Dorsolateral prefrontal cortex (tissue), 120 donors: ENCODE measurements at regions of chr14 and their contacts with region 1.

Region 1: GRCh38 chr14:80850197-80850814 is 91.2 kb downstream of the CEP128 start:
- DNase-seq: no peak
- H3K4me3 ChIP-seq: no peak overlapping the region
- H3K27ac ChIP-seq: no peak overlapping the region
- H3K27me3 ChIP-seq: no peaks in the 10 kb centered on the region
- CTCF ChIP-seq: peak; percentile 59 to 94 (median 78)

Region 2: GRCh38 chr14:78959674-78960264 is 1890.5 kb before region 1 on chr14:
- intact Hi-C with region 1: loop called in 1 of 2 experiments (anchors 10 kb)
- DNase-seq: peak; percentile 63 to 87 (median 80)
- H3K4me3 ChIP-seq: peak overlapping the region in 46 of 59 donors; percentile 2 to 54 (median 30)
- H3K27ac ChIP-seq: no peak overlapping the region
- H3K27me3 ChIP-seq: no peaks in the 10 kb centered on the region
- CTCF ChIP-seq: peak; percentile 73 to 97 (median 92)

Region 3: DNA sequence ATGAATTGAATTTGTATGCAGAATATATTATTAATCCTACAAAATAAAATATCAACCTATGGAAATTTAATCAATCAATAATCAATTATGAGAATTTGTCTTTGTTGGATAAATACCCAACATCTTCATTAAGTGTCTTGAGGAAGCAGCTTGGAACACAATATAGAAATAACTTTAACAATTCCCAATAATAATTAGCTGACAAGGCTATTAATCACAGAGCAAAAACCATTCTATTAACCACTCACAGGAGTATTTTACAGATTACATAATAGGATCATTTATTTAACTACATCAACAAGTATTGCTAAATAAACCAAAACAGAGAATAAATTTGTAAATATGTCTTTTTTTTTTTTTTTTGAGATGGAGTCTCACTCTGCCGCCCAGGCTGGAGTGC is 99.0 kb before region 1 on chr14:
- intact Hi-C with region 1: no loop called
- DNase-seq: no peak
- H3K4me3 ChIP-seq: no peak overlapping the region
- H3K27ac ChIP-seq: no peak overlapping the region
- H3K27me3 ChIP-seq: no peaks in the 10 kb centered on the region
- CTCF ChIP-seq: no peak

Region 4: GRCh38 chr14:80809663-80810062 is 40.6 kb before region 1 on chr14:
- intact Hi-C with region 1: no loop called
- DNase-seq: no peak
- H3K4me3 ChIP-seq: no peak overlapping the region
- H3K27ac ChIP-seq: no peak overlapping the region
- H3K27me3 ChIP-seq: no peaks in the 10 kb centered on the region
- CTCF ChIP-seq: no peak